Ascending aorta (tissue), 2 donors: ENCODE measurements at regions of chr4 and their contacts with region 1.

Region 1: DNA sequence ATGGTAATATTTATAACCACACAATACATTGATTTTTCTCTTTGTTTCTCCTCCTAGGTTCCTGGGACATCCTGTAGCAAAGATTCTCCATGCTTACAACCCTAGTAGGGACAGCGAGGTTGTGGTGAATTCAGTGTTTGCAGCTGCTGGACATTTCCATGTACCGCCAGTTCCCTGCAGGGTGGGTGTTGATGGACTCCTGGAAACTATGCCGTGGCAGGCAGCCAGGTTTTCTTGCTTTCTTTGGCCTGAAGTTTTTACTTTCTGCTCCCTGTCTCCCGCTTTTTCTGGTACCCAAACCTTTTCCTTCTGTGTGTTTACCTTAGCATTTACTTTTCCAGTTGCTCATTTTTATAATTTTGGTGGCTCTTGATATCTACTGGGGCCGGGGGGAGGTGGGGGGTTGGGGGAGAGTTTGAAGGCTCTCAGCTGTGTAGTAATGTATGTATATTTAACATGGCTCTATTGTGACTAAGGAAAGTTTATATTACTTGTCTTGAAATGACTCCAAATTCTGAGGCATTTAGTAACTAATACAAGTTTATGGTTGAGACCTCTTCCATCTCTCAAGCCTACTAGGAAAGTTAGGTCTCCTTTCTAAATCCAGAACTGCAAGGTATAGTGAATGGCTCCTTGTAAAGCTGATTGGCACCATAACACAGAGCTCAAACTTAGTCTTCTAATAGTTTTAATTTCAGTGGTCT is 89.7 kb downstream of the TMEM131L start:
- DNase-seq: peak in 1 of 2 donors; percentile 90
- H3K4me3 ChIP-seq: peak overlapping the region in 1 of 2 donors; percentile 23
- H3K27ac ChIP-seq: peak overlapping the region; percentile 60 to 92
- H3K4me1 ChIP-seq: peaks cover 3 to 26% of the 10 kb centered on the region in 2 donors
- H3K27me3 ChIP-seq: no peaks in the 10 kb centered on the region
- CTCF ChIP-seq: no peak

Region 2: GRCh38 chr4:153488006-153488891 is 67.6 kb before region 1 on chr4:
- intact Hi-C with region 1: loop called (anchors 5 kb)
- DNase-seq: peak in 1 of 2 donors; percentile 70
- H3K4me3 ChIP-seq: peak overlapping the region; percentile 14 to 47
- H3K27ac ChIP-seq: peak overlapping the region; percentile 88 to 90
- H3K4me1 ChIP-seq: peaks cover 21 to 34% of the 10 kb centered on the region in 2 donors
- H3K27me3 ChIP-seq: no peaks in the 10 kb centered on the region
- CTCF ChIP-seq: no peak

Region 3: GRCh38 chr4:153497988-153498967 is 57.6 kb before region 1 on chr4:
- intact Hi-C with region 1: loop called (anchors 2 kb)
- DNase-seq: no peak
- H3K4me3 ChIP-seq: peak overlapping the region in 1 of 2 donors; percentile 45
- H3K27ac ChIP-seq: peak overlapping the region; percentile 69 to 81
- H3K4me1 ChIP-seq: peaks cover 6 to 42% of the 10 kb centered on the region in 2 donors
- H3K27me3 ChIP-seq: no peaks in the 10 kb centered on the region
- CTCF ChIP-seq: no peak

Region 4: GRCh38 chr4:153535772-153536513 is 19.9 kb before region 1 on chr4:
- intact Hi-C with region 1: loop called (anchors 2 kb)
- DNase-seq: no peak
- H3K4me3 ChIP-seq: no peak overlapping the region
- H3K27ac ChIP-seq: no peak overlapping the region
- H3K4me1 ChIP-seq: peaks cover 5 to 20% of the 10 kb centered on the region in 2 donors
- H3K27me3 ChIP-seq: no peaks in the 10 kb centered on the region
- CTCF ChIP-seq: no peak

Region 5: DNA sequence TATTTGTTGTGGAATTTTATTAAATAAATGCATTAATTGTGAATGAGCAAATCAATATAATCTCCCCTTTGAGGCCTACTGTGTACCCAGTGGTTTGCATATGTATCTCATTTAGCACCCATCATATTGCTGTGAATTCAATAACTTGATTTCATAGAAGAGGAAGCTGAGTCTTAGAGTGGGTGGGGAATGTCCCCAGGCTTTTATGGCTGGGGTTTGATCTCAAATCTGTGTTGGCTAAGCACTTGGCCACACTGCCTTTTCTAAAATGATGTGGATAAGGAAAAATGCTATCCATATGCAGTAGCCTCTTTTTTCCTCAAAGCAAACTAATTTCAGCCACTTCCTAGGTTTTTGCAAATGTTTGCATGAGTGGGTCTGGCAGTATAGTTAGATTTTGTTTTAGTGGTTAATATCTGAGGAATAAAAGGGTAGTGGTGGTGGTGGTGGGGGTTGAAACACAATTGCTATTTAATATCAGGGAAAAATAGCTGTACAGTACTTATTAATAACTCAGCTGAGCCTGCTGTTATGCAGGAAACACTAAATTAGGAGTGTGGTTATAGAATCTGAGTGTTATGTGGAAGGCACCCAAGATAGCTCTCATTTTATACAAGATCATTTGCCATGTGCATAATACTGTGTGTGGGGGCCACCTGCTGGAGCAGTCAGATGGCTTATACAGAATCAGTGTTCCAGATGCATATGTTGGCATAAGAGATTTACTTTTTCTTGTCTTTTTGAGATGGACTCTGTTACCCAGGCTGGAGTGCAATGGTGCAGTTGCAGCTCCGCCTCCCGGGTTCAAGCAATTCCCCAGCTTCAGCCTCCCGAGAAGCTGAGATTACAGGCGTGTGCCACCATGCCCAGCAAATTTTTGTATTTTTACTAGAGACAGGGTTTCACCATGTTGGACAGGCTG is 18.3 kb after region 1 on chr4:
- intact Hi-C with region 1: loop called (anchors 2 kb)
- DNase-seq: peak in 1 of 2 donors; percentile 83
- H3K4me3 ChIP-seq: no peak overlapping the region
- H3K27ac ChIP-seq: no peak overlapping the region
- H3K4me1 ChIP-seq: peaks cover 3 to 10% of the 10 kb centered on the region in 2 donors
- H3K27me3 ChIP-seq: no peaks in the 10 kb centered on the region
- CTCF ChIP-seq: peak; percentile 63 to 79 (median 63)

Region 6: GRCh38 chr4:154427149-154427548 is 871.3 kb after region 1 on chr4:
- intact Hi-C with region 1: no loop called
- DNase-seq: no peak
- H3K4me3 ChIP-seq: no peak overlapping the region
- H3K27ac ChIP-seq: no peak overlapping the region
- H3K4me1 ChIP-seq: no peaks in the 10 kb centered on the region
- H3K27me3 ChIP-seq: no peaks in the 10 kb centered on the region
- CTCF ChIP-seq: no peak